ENCODE measurements at regions of chr10 and their contacts with region 1.

Region 1: DNA sequence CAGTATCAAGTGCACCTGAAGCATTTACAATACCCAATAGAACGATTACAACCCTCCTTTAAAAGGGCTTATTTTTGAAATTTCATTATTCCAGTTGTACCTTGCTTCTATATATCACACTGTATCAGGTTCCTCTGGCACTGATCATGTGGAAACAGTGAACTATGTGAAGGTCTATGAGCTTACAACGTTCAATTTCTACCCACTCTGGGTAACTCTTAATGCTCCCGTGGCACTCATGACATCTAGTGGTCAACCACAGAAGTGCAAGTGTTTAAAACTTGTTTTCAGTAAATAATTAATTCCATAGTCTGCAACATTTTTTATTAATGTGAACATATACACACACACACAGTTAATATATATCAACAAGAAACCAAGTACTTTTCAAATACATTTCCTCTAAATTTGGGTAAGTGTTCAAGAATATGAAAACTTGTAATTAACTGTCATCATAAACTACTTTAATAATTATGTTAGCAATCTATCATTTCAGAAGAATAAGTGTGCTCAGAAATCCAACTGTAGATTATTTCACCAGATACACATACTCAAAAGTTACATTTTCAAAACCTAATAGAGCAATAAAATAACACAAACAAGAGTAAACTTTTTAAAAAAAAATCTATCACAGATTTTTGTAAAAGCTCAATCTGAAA is 61.0 kb downstream of the MPP7 start:
- DNase-seq: peak; percentile 27
- ATAC-seq: peak; percentile 60
- H3K4me3 ChIP-seq: no peak overlapping the region
- H3K27ac ChIP-seq: no peak overlapping the region
- H3K4me1 ChIP-seq: no peaks in the 10 kb centered on the region
- H3K27me3 ChIP-seq: no peaks in the 10 kb centered on the region; the same call in 1 of the 2 replicates
- CTCF ChIP-seq: peak; percentile 76; the same call in 1 of the 2 replicates

Region 2: DNA sequence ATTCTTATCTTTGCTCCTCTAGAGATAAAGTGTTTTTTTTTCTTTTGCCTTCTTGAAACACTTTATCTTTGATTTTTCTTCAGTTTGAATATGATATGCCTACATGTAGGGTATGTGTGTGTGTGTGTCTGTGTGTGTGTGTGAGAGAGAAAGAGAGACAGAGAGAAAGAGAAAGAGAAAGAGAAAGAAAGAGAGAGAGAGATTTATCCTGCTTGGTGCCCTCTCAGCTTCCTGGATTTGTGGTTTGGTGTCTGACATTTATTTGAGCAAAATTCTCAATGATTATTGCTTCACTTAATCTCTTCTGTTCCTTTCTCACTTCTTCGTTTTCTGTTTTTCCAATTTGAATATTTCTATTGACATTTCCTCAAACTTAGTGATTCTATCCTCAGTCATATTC is 677.5 kb before region 1 on chr10:
- CTCF ChIA-PET with region 1: no interaction called
- POLR2A ChIA-PET with region 1: no interaction called
- in situ Hi-C with region 1: no loop called
- intact Hi-C with region 1: loop called (anchors 5 kb)
- DNase-seq: no peak
- ATAC-seq: no peak
- H3K4me3 ChIP-seq: no peak overlapping the region
- H3K27ac ChIP-seq: no peak overlapping the region
- H3K4me1 ChIP-seq: no peaks in the 10 kb centered on the region
- H3K27me3 ChIP-seq: no peaks in the 10 kb centered on the region
- CTCF ChIP-seq: no peak

Measured in Panc1 (cell line).